ENCODE measurements at regions of chr5 and their contacts with region 1.

Region 1: GRCh38 chr5:145825751-145826180 is 9.4 kb downstream of the PRELID2 start:
- DNase-seq: no peak
- ATAC-seq: peak; percentile 78
- H3K4me3 ChIP-seq: no peak overlapping the region
- H3K27ac ChIP-seq: no peak overlapping the region
- H3K4me1 ChIP-seq: peaks cover 21% of the 10 kb centered on the region; the same call in 1 of the 2 replicates
- H3K27me3 ChIP-seq: no peaks in the 10 kb centered on the region
- CTCF ChIP-seq: peak; percentile 80

Region 2: DNA sequence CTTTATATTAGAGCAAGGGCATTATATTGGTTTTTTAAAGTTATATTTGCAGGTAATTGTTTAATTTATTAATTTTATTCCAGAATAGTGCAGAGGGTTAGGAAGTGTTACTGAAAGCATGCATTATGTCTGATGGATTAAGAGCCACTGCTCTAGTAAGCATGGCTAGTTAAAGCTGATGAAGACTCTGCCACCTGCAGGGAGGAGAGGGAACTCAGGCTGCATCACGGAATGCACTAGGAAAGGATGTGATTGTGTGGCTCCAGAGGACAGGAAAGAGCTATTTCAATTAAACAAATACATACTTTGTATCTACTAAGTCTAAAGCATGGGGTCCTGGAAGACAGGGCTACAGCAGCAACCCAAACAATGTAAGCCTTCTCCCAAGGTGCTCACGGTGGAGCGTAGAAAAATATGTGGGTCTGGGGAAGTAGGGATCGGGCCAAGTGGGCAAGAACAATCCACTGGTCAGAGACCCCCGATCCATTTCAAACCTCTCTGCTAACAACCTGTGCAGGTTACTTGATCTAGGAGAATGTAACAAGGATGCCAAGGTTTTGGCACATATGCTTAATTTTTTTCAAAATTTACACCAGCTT is 62.3 kb after region 1 on chr5:
- CTCF ChIA-PET with region 1: interaction called, 4 read pairs
- POLR2A ChIA-PET with region 1: no interaction called
- in situ Hi-C with region 1: no loop called
- intact Hi-C with region 1: loop called (anchors 2 kb)
- DNase-seq: peak; percentile 50
- ATAC-seq: peak; percentile 98
- H3K4me3 ChIP-seq: no peak overlapping the region
- H3K27ac ChIP-seq: no peak overlapping the region
- H3K4me1 ChIP-seq: 0 out of 2 replicates have a peak, but pooled peaks cover 2% of the 10 kb centered on the region
- H3K27me3 ChIP-seq: no peaks in the 10 kb centered on the region
- CTCF ChIP-seq: peak; percentile 88